Gastrocnemius medialis (tissue), 4 donors: ENCODE measurements at regions of chr15 and their contacts with region 1.

Region 1: DNA sequence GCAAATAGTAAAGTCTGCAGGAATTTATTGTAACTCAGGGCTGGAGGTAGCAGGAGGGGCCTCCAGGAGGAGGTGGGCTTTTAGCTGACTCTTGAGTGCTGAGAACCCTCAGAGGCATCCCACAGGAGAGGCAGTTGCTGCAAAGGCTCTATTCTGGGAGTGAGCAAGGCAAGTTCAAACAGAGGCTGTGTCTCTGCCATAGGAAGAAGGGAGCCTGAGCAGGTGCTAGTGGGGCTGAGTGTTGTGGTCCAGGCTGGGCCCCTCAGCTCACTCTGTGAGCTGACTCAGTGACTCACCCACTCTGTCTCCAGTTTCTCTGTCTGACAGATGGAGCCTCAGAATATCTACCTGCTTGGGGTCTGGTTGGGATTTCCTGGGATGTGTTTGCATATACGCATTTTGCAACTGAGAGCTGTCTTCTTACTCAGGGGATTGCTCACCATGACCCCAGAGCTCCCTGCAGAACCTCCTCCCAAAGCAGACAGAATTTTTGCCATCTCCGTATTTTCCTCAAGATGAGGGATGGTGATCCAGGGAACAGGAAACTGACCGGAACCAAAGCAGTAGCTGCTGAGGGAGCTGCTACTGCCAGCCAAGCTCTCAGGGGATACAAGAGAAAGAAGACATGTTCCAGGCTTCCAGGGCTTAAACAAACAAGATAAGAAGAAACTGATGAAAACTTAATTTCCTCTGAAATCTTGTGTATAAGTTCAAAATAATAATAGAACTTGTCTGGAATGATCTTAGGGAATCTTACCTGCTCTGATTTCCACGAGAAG is 13.6 kb upstream of the NOX5 start:
- DNase-seq: no peak
- ATAC-seq: no peak
- H3K4me3 ChIP-seq: no peak overlapping the region
- H3K27ac ChIP-seq: no peak overlapping the region
- H3K4me1 ChIP-seq: peaks cover 6 to 9% of the 10 kb centered on the region in 2 donors
- H3K27me3 ChIP-seq: no peaks in the 10 kb centered on the region
- CTCF ChIP-seq: no peak
- POLR2A ChIP-seq: no peak

Region 2: GRCh38 chr15:68817304-68818065 is 183.4 kb before region 1 on chr15:
- in situ Hi-C with region 1: no loop called
- intact Hi-C with region 1: no loop called
- DNase-seq: peak; percentile 43 to 67
- ATAC-seq: peak; percentile 30 to 47
- H3K4me3 ChIP-seq: peak overlapping the region; percentile 69 to 97 (median 87)
- H3K27ac ChIP-seq: peak overlapping the region; percentile 93 to 99 (median 99)
- H3K4me1 ChIP-seq: peaks cover 47% of the 10 kb centered on the region in 2 donors
- H3K27me3 ChIP-seq: no peaks in the 10 kb centered on the region
- CTCF ChIP-seq: no peak
- POLR2A ChIP-seq: peak; percentile 39 to 51

Region 3: DNA sequence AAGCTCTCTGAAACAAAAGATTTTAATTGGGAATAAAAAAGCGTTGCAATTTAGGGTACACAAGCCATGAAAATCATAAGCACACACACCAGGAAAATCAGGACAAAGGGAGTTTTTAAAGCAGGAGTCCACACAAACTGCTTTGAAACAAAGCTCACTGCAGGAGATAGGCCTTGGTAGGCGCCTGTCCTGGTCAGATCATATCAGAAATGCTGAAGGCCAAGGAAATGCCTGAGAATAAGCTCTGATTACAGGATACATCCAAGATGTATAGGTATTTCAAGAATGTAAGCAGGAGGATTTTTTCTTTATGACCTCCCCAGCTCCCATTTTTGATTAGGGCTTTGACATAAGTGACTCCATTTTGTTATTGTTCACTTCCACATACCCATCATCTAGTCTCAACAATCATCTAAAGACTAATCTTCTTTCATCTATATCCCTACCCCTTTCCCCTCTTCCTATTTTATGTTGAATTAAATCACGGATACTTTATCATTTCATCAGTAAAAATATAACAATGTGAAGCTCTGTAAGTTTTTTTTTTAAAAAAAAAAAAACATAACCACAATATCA is 51.9 kb before region 1 on chr15:
- in situ Hi-C with region 1: no loop called
- intact Hi-C with region 1: loop called (anchors 10 kb)
- DNase-seq: no peak
- ATAC-seq: no peak
- H3K4me3 ChIP-seq: no peak overlapping the region
- H3K27ac ChIP-seq: no peak overlapping the region
- H3K4me1 ChIP-seq: no peaks in the 10 kb centered on the region
- H3K27me3 ChIP-seq: no peaks in the 10 kb centered on the region
- CTCF ChIP-seq: no peak
- POLR2A ChIP-seq: no peak